Ascending aorta (tissue), 2 donors: ENCODE measurements at regions of chr4 and their contacts with region 1.

Region 1: GRCh38 chr4:185471235-185472102 is at the start of gene CCDC110:
- DNase-seq: peak; percentile 18 to 96
- H3K4me3 ChIP-seq: peak within 1 kb of the TSS; percentile 80 to 97
- H3K27ac ChIP-seq: peak within 1 kb of the TSS; percentile 68 to 74
- H3K4me1 ChIP-seq: peaks cover 0 to 2% of the 10 kb centered on the region in 2 donors
- H3K27me3 ChIP-seq: no peaks in the 10 kb centered on the region
- CTCF ChIP-seq: peak; percentile 48 to 75 (median 65)
- total RNA-seq, gene CCDC110: not detected

Region 2: DNA sequence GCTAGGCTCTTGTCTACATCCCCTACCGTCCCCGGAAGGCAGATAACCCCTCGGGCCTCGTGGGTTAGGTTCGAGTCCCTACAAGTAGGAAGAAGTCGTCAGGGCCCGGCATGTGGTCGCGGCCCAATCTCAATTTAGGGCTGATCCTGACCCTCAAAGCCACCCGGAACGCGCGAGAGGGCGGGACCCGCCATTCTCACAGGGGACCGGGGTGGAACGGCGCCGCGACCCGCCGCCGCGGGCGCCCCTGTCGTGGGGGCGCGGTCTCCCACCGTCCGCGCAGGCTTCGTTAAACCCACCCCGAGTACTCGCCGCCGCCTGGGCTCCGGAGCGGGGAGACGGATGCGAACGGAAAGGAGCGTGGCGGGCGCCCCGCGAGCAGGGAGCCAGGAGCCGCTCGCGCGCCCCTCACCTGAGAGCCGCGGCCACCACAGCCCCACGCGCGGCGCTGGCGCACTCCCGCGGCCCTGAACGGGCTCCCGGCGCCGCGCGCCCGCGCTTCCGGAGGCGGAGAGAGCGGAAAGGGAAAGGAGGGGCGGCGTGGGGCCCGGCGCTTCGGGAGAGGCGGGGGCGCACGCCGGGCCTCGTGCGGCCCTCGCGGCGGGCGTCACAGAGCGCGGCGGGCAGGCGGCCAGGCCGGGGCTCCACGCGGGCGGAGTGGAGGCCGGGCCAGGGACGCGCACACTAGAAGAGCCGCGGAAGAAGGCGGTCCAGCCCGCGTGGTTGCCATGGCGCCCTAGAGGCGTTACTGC is 267.8 kb before region 1 on chr4 and contains the start of gene CFAP97:
- intact Hi-C with region 1: loop called (anchors 2 kb)
- DNase-seq: peak; percentile 69 to 95
- H3K4me3 ChIP-seq: peak within 1 kb of the TSS; percentile 77 to 83
- H3K27ac ChIP-seq: peak within 1 kb of the TSS; percentile 99
- H3K4me1 ChIP-seq: peaks cover 2 to 20% of the 10 kb centered on the region in 2 donors
- H3K27me3 ChIP-seq: no peaks in the 10 kb centered on the region
- CTCF ChIP-seq: no peak
- total RNA-seq, gene CFAP97: 27.7 TPM

Region 3: DNA sequence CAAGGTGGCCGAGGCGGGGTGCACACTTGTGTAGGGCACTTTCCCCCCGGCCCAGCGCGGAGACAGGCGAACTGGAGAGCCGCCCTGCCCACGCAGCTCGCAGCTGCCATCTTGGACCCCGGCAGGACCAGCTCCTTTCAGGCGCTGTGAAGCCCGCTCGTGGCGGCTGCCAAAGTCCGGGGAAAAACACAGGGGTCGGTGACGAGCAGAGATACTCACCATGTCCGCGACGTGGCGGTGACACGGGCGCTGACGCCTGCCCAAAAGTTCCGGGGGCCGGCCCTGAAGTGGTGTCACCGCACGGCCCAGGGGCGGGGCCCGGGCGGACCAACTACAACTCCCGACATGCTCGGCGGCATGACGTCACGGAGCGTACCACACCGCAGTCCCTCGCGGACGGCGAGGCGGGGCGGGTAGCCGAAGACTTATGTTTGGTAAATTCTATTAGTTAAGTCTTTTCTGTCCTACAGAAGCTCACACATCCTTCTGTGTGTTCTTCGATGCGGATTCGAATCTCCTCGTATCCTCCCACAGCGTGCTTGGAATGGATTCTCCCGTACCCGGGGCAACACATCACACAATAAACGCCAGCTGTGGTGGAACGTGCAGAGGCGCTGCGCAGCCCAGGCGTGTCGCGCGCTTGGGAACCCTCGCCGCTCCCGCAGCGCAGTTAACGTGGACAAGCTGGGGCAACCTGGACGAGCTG is 45.7 kb before region 1 on chr4 and contains the start of gene UFSP2:
- intact Hi-C with region 1: loop called (anchors 1 kb)
- DNase-seq: peak; percentile 69 to 95
- H3K4me3 ChIP-seq: peak within 1 kb of the TSS; percentile 66 to 80
- H3K27ac ChIP-seq: peak within 1 kb of the TSS; percentile 88 to 96
- H3K4me1 ChIP-seq: peaks cover 0 to 15% of the 10 kb centered on the region in 2 donors
- H3K27me3 ChIP-seq: no peaks in the 10 kb centered on the region
- CTCF ChIP-seq: no peak
- total RNA-seq, gene UFSP2: 8.6 TPM

Region 4: DNA sequence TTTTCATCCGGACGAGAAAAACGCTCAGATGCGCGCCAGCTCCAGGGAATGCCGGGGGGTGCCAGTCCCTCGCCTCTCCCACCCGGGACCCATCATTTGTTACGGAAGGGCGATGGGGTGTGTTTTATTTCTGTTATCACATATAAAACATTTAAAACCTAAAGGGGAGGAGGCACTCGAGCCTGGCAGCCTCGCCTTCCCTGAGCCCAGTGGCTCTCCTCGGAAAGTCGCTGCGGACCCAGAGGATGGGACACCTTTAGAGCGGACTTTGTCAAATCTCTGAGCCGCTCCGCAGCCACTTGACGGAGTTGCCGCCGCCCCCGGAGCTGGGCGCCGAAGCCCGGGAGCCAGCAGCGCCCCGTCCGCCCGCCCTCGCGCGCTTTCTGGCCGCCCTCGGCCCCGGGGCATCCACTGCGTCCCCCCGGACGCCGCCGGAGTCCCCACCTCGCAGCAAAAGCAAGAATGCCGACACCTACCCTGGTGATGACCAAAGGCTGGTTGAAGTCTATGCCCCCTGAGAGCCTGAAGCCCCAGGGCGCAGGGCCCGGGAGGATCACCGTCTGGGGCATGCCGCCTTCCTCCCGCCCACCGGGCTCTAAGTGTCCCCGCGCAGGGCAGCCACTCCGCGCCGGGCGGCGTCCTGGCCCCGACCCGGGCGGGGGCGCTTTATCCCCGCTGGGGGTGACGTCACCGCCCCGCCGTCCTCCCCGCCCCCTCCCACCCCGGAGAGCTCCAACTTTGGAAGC is 63.6 kb after region 1 on chr4 and contains the start of gene PDLIM3:
- intact Hi-C with region 1: loop called (anchors 1 kb)
- DNase-seq: peak in 1 of 2 donors; percentile 92
- H3K4me3 ChIP-seq: peak within 1 kb of the TSS; percentile 65 to 93
- H3K27ac ChIP-seq: peak within 1 kb of the TSS; percentile 94 to 98
- H3K4me1 ChIP-seq: peaks cover 0 to 3% of the 10 kb centered on the region in 2 donors
- H3K27me3 ChIP-seq: no peaks in the 10 kb centered on the region
- CTCF ChIP-seq: no peak
- total RNA-seq, gene PDLIM3: 445 TPM

Region 5: DNA sequence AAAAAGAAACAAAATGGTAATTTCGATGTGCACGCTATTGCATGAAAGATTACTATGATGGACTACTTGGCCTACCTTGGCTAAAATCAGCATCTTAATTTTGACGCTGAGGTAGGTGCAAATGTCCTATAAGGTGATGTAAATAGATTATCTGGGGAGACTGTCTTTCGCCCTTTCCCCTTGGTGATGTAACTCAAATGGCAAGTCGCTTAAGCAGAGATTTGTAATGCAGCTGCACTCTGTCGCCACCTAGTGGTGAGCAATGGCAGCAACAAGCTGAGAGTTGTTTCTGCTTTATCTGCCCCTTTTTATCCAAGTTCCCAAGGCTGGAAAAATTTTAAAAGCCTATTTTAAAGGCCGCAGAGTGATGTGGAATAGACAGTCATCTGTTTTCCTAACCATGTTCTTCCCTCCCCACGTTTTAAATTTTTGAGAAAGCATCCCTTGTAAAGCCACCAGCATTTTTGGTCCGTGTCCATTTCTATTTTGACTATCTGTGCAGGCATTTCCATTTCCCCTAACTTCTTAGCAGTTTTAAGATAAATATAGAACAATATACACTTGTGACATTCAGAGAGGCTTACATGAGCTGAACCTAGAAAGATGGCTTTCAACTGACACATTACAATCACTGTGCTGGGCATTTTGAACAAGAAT is 126.2 kb after region 1 on chr4:
- intact Hi-C with region 1: loop called (anchors 1 kb)
- DNase-seq: peak; percentile 28 to 88
- H3K4me3 ChIP-seq: no peak overlapping the region
- H3K27ac ChIP-seq: peak overlapping the region; percentile 66 to 72
- H3K4me1 ChIP-seq: peaks cover 0 to 17% of the 10 kb centered on the region in 2 donors
- H3K27me3 ChIP-seq: no peaks in the 10 kb centered on the region
- CTCF ChIP-seq: peak; percentile 93 to 99 (median 95)